KBM-7 (cell line): ENCODE measurements at regions of chr3 and their contacts with region 1.

Region 1: DNA sequence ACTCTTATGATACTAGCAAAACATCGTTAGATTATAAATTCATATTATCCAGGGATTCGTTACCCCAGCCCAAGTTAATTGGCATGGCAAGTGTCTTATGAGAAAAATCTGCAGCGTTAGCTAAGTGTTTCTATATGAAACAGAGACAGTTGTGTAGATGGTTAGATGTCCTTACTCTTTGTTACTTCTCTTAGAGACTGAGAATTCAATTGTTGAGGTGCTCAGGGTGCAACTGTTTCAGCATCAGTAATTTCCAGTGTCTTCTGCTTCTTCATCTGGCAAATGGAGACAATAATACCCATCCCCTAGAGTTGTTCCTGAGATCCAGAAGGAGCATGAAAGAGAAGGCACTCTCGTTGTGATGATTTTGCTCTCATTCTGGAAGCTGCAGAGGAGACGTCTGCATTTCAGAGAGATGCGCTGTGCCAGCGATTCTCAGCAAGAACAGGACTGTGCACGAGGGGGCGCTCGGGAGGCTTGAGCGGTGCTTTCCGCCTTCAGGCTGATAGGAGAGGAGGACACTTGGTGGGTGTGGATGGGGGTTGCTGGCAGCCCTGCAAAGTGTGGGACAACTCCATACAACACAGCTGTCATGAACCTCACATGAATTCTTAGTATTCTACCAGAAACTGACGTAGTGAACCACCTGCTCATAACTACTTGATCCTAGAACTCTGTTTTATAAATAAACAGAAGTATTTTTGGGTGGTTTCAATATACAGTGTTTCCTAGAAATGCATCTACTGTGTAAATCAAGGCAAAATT is 39.7 kb upstream of the SPSB4 start:
- DNase-seq: peak; percentile 70

Region 2: DNA sequence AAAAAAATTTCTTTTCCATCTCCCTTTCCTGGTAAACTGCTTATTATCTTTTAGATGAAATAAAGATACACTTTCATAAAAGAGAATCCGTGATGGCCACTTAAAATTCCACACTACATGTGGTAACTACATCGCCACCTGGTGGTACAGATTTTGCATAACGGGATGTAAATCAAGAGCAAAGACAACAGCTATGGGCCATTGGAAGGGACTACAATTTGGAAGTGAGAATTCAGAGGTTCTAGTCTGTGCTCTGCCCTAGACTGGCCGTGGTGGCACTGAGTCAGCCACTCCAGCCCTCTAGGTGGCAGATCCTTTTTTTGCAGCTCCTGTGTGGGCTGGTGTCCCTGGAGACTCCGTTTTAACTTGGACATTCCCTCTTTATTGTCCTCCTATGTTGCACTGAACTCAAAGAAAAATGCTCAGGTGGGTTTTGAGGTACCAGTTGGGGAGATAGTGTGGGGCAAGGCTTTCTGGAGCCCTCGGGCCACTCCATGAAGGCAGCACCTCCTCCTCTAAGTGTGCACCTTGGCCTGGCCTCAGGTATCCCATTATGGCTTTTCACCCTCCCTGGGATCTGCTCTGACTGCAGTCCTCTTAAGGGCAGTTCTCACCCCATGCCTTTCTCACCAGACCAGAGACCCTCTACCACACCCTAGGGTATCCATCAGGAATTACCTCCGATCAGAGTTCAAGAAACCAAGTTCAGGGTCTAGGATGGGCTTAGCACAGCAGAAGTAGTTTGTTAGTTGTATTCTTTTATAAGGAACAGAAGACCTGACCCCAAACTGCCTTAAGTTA is 94.6 kb after region 1 on chr3:
- in situ Hi-C with region 1: loop called (anchors 25 kb)
- DNase-seq: peak; percentile 71

Region 3: DNA sequence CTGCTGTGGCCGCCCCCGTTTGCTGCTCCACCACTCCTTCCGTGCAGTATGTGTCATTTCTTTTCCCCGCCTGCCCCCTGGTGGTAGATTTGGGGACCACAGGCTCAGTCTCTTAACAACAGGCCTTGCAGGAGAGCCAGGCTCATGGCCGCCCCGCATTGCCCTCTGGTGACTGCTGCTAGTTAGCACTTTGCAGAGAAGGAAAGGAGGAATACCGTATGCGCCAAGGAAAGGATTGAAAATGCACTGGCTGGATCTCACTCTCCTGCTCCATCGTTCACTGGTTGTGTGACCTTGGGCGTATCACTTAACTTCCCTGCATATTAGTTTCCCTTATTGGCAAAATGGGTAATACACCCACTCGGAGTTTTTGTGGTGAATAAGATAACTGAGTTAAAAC is 180.9 kb after region 1 on chr3:
- in situ Hi-C with region 1: loop called (anchors 25 kb)
- DNase-seq: peak; percentile 97